CD4-positive, alpha-beta T cell (primary cell): ENCODE measurements at regions of chr1 and their contacts with region 1.

Region 1: GRCh38 chr1:206469933-206470691 is at the start of gene IKBKE:
- DNase-seq: peak; percentile 24 to 77 (median 40)
- ATAC-seq: peak; percentile 67
- H3K4me3 ChIP-seq: peak within 1 kb of the TSS; percentile 99
- H3K4me3 Mint-ChIP-seq: peak within 1 kb of the TSS; percentile 88
- H3K27ac ChIP-seq: peak within 1 kb of the TSS; percentile 55 to 61
- H3K27ac Mint-ChIP-seq: peak within 1 kb of the TSS; percentile 79
- H3K4me1 ChIP-seq: peaks cover 86% of the 10 kb centered on the region
- H3K4me1 Mint-ChIP-seq: peaks cover 76% of the 10 kb centered on the region
- H3K27me3 ChIP-seq: no peaks in the 10 kb centered on the region
- H3K27me3 Mint-ChIP-seq: no peaks in the 10 kb centered on the region
- CTCF ChIP-seq: no peak
- total RNA-seq, gene IKBKE: 27.9 to 29.8 TPM

Region 2: GRCh38 chr1:206507284-206508129 is 37.4 kb after region 1 on chr1 and contains the start of gene RASSF5:
- CTCF ChIA-PET with region 1: no interaction called
- POLR2A ChIA-PET with region 1: interaction called, 14 read pairs
- intact Hi-C with region 1: no loop called
- DNase-seq: peak; percentile 65 to 86 (median 80)
- ATAC-seq: peak; percentile 92
- H3K4me3 ChIP-seq: peak within 1 kb of the TSS; percentile 71
- H3K4me3 Mint-ChIP-seq: peak within 1 kb of the TSS; percentile 86
- H3K27ac ChIP-seq: no peak within 1 kb of the TSS
- H3K27ac Mint-ChIP-seq: peak within 1 kb of the TSS; percentile 39
- H3K4me1 ChIP-seq: peaks cover 37% of the 10 kb centered on the region
- H3K4me1 Mint-ChIP-seq: peaks cover 30% of the 10 kb centered on the region
- H3K27me3 ChIP-seq: peaks cover 4 to 21% of the 10 kb centered on the region in 2 experiments
- H3K27me3 Mint-ChIP-seq: peaks cover 15% of the 10 kb centered on the region
- CTCF ChIP-seq: no peak
- total RNA-seq, gene RASSF5: 153 to 156 TPM